HEK293T (cell line): ENCODE measurements at regions of chr11 and their contacts with region 1.

Region 1: DNA sequence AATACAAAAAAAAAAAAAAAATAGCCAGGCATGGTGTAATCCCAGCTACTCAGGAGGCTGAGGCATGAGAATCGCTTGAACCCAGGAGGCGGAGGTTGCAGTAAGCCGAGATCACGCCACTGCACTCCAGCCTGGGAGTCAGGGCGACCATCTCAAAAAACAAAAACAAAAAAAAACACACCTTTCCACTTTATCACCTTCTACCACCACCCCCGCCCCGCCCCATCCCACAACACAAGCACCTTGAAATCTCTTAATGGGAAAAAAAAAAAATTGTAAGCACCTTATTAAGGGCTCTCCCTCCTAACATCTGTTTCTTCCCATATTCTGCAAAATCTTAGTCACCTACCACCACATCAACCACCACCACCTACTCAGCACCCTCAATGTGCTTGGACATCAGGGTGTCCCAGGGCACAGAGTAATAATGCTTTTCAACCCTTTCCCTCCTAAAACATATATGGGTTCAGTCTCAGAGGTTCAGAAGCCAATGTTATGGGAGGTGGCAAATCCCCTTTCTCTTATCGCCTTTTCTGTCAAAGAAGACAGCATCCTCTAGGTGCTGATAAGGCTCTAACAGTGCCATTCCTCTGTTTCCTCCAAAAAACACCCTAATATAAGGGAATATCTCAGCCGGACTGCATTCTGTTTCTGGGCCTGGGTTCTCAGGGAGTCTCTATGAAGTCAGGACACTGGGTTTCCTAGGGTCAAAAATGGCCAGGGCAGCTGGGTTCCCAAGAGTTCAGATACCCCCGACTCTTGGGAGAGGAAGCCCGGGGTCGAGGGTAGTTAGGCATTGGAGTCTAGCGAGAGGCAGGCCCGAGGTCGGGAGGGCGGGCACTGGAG is 718 bp downstream of the INTS5 start:
- DNase-seq: no peak

Region 2: GRCh38 chr11:62621567-62622470 is 30.6 kb before region 1 on chr11 and contains the start of gene B3GAT3:
- CTCF ChIA-PET with region 1: no interaction called
- POLR2A ChIA-PET with region 1: interaction called, 23 read pairs
- DNase-seq: peak; percentile 98